GM23248 (cell line): ENCODE measurements at regions of chr3 and their contacts with region 1.

Region 1: DNA sequence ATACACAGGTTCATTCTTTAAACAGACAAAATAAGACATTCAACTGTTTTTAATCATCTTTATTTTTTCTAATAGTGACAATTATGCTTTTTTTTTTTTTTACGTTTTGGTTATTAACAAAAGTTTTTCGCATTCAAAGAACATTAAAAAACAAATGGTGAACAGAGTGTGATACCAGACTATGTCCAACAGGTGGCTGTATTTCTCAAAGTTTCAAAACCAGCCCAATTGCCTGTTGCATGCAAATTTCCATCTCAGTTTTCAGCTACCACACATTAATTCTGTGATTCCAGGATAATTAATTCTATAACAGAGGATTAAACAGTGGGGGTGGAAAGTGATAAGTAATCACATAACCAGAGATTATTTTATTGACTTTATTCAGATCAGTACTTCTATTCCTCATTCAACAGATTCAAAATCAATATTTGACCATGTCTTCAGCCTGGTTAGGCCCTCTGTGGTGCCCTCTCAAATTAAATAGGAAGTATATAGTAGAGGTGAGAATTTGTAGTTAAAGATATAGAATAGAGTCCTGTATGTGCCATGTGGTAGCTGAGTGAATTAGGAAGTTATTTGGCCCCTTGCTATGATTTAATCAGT is 122.2 kb upstream of the DCBLD2 start:
- DNase-seq: peak; percentile 75
- H3K4me3 ChIP-seq: no peak overlapping the region
- H3K27ac ChIP-seq: no peak overlapping the region
- H3K4me1 ChIP-seq: 0 out of 2 replicates have a peak, but pooled peaks cover 3% of the 10 kb centered on the region
- H3K27me3 ChIP-seq: no peaks in the 10 kb centered on the region

Region 2: GRCh38 chr3:99172736-99173657 is 149.3 kb after region 1 on chr3:
- in situ Hi-C with region 1: loop called (anchors 10 kb)
- DNase-seq: peak; percentile 79
- H3K4me3 ChIP-seq: no peak overlapping the region
- H3K27ac ChIP-seq: no peak overlapping the region
- H3K4me1 ChIP-seq: no peaks in the 10 kb centered on the region
- H3K27me3 ChIP-seq: no peaks in the 10 kb centered on the region